ENCODE measurements at regions of chr9 and their contacts with region 1.

Region 1: DNA sequence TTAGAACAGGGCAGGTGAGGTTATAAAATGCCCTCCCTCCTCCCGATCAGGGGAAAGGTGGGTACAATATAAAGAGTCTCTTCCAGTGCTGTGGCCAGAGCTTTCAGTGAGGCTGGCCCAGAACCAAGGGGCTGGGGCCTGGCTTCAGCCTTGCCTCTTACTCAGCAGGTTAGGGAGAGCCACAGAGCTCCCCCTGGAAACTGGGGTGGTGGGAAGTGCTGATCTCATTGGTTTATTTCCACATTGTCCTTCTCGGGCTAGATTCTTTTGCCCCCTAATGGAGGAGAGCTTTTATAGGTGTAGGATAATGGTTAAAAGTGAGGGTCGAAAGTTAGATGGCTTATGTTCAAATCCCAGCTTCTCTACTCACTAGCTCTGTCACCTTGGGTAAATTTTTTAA is 186.7 kb upstream of the TBC1D2 start:
- DNase-seq: no peak
- H3K4me3 ChIP-seq: no peak overlapping the region
- H3K27ac ChIP-seq: no peak overlapping the region
- H3K4me1 ChIP-seq: no peaks in the 10 kb centered on the region
- CTCF ChIP-seq: no peak

Region 2: DNA sequence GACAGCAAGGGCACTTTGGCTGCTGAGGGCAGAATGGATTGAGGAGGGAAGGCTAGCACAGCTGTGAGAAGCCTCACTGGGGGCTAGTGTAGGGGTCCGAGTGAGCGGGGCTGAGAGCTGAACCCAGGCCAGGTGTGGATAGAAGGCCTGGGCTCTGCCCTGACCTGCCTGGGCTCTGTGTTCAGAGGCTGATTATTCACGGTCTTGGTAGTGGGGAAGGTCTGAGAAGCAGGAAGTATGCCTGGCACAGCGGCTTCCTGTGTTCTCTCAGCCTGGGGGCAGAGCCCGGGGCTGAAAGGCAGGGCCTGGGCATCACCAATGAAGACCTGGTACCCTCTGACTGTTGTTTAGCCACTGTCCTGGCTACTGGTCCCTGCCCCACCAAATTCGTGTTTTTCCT is 50.2 kb before region 1 on chr9:
- CTCF ChIA-PET with region 1: no interaction called
- POLR2A ChIA-PET with region 1: no interaction called
- intact Hi-C with region 1: loop called (anchors 2 kb)
- DNase-seq: no peak
- H3K4me3 ChIP-seq: no peak overlapping the region
- H3K27ac ChIP-seq: no peak overlapping the region
- H3K4me1 ChIP-seq: no peaks in the 10 kb centered on the region
- CTCF ChIP-seq: no peak

Region 3: DNA sequence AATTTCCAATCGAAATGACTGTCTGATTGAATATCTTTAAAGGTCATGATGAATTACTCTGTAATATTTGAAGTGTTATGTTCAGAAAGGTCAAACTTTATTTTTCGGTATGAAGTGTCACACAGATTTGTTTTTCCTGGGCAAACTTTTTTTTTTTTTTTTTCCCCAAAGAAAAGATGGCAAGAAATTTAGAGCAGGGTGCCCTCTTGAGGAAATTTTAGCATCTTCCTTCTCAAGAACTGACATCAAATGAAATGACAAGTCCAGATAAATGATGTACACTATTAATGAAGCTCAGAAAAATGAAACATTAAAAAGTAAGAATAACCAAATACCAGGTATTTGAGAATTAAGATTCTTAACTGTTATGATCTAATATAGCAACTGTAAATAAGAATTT is 1780.6 kb after region 1 on chr9:
- CTCF ChIA-PET with region 1: no interaction called
- POLR2A ChIA-PET with region 1: no interaction called
- intact Hi-C with region 1: no loop called
- DNase-seq: peak; percentile 58
- H3K4me3 ChIP-seq: no peak overlapping the region
- H3K27ac ChIP-seq: no peak overlapping the region
- H3K4me1 ChIP-seq: peaks cover 10% of the 10 kb centered on the region
- CTCF ChIP-seq: peak; percentile 83